A673 (cell line): ENCODE measurements at regions of chr21 and their contacts with region 1.

Region 1: GRCh38 chr21:16942703-16943102 is 570.1 kb upstream of the CXADR start:
- DNase-seq: peak; percentile 17
- H3K4me3 ChIP-seq: no peak overlapping the region
- H3K27ac ChIP-seq: no peak overlapping the region
- H3K4me1 ChIP-seq: no peaks in the 10 kb centered on the region
- H3K27me3 ChIP-seq: no peaks in the 10 kb centered on the region
- CTCF ChIP-seq: peak; percentile 44; the same call in 1 of the 2 replicates

Region 2: GRCh38 chr21:16777041-16777720 is 165.5 kb before region 1 on chr21:
- CTCF ChIA-PET with region 1: no interaction called
- POLR2A ChIA-PET with region 1: no interaction called
- intact Hi-C with region 1: no loop called
- DNase-seq: no peak
- H3K4me3 ChIP-seq: no peak overlapping the region
- H3K27ac ChIP-seq: no peak overlapping the region
- H3K4me1 ChIP-seq: no peaks in the 10 kb centered on the region
- H3K27me3 ChIP-seq: no peaks in the 10 kb centered on the region
- CTCF ChIP-seq: no peak

Region 3: GRCh38 chr21:17045214-17045853 is 102.6 kb after region 1 on chr21:
- CTCF ChIA-PET with region 1: no interaction called
- POLR2A ChIA-PET with region 1: no interaction called
- intact Hi-C with region 1: loop called (anchors 10 kb)
- DNase-seq: peak; percentile 15
- H3K4me3 ChIP-seq: no peak overlapping the region
- H3K27ac ChIP-seq: no peak overlapping the region
- H3K4me1 ChIP-seq: no peaks in the 10 kb centered on the region
- H3K27me3 ChIP-seq: no peaks in the 10 kb centered on the region
- CTCF ChIP-seq: peak; percentile 46

Region 4: GRCh38 chr21:17266510-17266909 is 323.8 kb after region 1 on chr21:
- CTCF ChIA-PET with region 1: no interaction called
- POLR2A ChIA-PET with region 1: no interaction called
- intact Hi-C with region 1: loop called (anchors 2 kb)
- DNase-seq: no peak
- H3K4me3 ChIP-seq: no peak overlapping the region
- H3K27ac ChIP-seq: no peak overlapping the region
- H3K4me1 ChIP-seq: no peaks in the 10 kb centered on the region
- H3K27me3 ChIP-seq: no peaks in the 10 kb centered on the region
- CTCF ChIP-seq: no peak